IMR-90 (cell line): ENCODE measurements at regions of chr16 and their contacts with region 1.

Region 1: DNA sequence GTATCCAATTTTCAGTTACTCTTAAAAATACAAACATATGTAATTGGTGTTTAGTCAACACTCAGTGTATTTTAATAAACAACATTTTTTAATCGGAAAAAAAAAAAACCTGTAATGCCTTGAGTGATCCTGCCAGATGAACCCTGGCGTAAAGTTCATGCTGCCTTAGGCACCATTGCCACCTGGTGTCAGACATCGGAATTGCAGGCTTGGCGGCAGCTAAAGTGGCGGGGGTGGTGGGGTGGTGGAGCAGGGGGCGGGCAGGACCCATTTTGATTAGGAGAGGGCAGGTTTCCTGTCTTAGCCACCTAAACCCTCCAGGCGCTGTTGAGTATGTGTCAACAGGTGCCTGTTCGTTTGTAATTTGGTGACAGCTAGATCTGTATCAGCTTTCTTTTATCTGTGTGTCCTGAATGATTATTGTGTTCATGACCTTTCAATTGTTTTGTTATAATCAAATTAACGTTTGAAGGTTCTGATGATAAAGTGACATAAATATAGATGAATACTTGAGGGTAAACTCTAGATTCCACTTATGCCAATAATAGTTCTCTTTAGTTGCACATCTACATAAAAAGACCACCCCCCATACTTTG is 588.7 kb downstream of the CDH13 start:
- DNase-seq: peak; percentile 44
- ATAC-seq: peak; percentile 79
- H3K4me3 ChIP-seq: no peak overlapping the region
- H3K27ac ChIP-seq: no peak overlapping the region
- H3K4me1 ChIP-seq: no peaks in the 10 kb centered on the region
- H3K27me3 ChIP-seq: no peaks in the 10 kb centered on the region
- CTCF ChIP-seq: peak; percentile 80
- POLR2A ChIP-seq: no peak
- RAD21 ChIP-seq: peak; percentile 90

Region 2: DNA sequence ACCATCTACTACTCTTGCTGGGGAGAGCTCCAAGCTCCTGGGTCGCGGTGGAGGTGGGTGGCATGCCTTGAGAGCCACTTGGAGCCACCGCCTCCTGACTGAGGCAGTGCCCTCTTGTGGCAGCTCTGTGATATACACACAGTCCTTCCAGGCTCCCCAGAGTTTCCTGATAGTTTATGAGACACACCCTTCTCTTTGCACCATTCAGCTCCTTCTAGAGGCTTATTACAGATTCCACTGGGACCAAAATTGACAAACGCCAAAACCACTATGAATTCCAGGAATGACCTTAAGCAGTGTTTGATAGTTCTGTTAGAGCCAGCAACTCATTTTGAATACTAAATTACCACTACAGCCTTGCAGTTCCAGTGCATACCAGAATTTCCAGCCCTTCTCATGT is 758.8 kb before region 1 on chr16:
- CTCF ChIA-PET with region 1: no interaction called
- POLR2A ChIA-PET with region 1: no interaction called
- dilution Hi-C with region 1: no loop called
- in situ Hi-C with region 1: no loop called
- intact Hi-C with region 1: loop called (anchors 1 kb)
- DNase-seq: peak; percentile 36
- ATAC-seq: peak; percentile 93
- H3K4me3 ChIP-seq: no peak overlapping the region
- H3K27ac ChIP-seq: no peak overlapping the region
- H3K4me1 ChIP-seq: no peaks in the 10 kb centered on the region
- H3K27me3 ChIP-seq: peaks cover 1% of the 10 kb centered on the region
- CTCF ChIP-seq: peak; percentile 61
- POLR2A ChIP-seq: no peak
- RAD21 ChIP-seq: peak; percentile 40; the same call in 1 of the 2 replicates

Region 3: DNA sequence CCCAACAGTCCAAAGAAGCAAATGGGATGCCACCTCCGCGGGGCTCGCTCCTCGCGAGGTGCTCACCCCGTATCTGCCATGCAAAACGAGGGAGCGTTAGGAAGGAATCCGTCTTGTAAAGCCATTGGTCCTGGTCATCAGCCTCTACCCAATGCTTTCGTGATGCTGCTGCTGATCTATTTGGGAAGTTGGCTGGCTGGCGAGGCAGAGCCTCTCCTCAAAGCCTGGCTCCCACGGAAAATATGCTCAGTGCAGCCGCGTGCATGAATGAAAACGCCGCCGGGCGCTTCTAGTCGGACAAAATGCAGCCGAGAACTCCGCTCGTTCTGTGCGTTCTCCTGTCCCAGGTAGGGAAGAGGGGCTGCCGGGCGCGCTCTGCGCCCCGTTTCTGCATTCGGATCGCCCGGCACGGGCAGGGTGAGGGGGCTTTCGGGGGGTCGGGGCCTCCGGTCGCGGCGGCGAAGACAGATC is 588.7 kb before region 1 on chr16 and contains the start of gene CDH13:
- CTCF ChIA-PET with region 1: no interaction called
- POLR2A ChIA-PET with region 1: no interaction called
- dilution Hi-C with region 1: no loop called
- in situ Hi-C with region 1: loop called (anchors 10 kb)
- intact Hi-C with region 1: loop called (anchors 1 kb)
- DNase-seq: peak; percentile 77
- ATAC-seq: peak; percentile 40
- H3K4me3 ChIP-seq: peak within 1 kb of the TSS; percentile 60
- H3K27ac ChIP-seq: peak within 1 kb of the TSS; percentile 46
- H3K4me1 ChIP-seq: peaks cover 18% of the 10 kb centered on the region
- H3K27me3 ChIP-seq: peaks cover 21% of the 10 kb centered on the region
- CTCF ChIP-seq: no peak
- POLR2A ChIP-seq: peak; percentile 66; the same call in 1 of the 2 replicates
- RAD21 ChIP-seq: no peak
- total RNA-seq, gene CDH13: 45.8 and 74.7 TPM in 2 replicates

Region 4: GRCh38 chr16:82748026-82748425 is 467.5 kb before region 1 on chr16:
- CTCF ChIA-PET with region 1: no interaction called
- POLR2A ChIA-PET with region 1: no interaction called
- dilution Hi-C with region 1: no loop called
- in situ Hi-C with region 1: no loop called
- intact Hi-C with region 1: loop called (anchors 5 kb)
- DNase-seq: peak; percentile 66
- ATAC-seq: peak; percentile 57; the same call in 1 of the 2 replicates
- H3K4me3 ChIP-seq: no peak overlapping the region
- H3K27ac ChIP-seq: no peak overlapping the region
- H3K4me1 ChIP-seq: no peaks in the 10 kb centered on the region
- H3K27me3 ChIP-seq: no peaks in the 10 kb centered on the region
- CTCF ChIP-seq: peak; percentile 42
- POLR2A ChIP-seq: no peak
- RAD21 ChIP-seq: peak; percentile 43

Region 5: DNA sequence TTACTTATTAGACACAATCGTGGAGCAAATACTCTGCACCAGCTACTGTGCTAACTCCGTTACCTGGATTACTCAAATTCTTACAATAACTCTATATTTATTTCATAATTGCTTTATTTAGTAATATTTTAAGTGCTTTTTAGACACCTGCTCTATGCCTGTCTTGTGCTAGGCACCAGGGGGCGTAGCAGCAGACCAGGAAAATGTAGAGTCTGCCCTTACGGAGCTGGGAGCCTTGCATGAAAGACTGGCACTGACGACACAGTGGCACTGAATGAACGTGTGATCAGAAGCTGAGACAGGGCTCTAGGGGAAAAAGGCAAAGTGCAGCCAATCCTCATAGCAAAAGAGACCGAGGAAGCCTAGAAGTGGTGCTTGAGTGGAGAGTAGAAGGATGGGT is 102.2 kb before region 1 on chr16:
- CTCF ChIA-PET with region 1: interaction called, 4 read pairs
- POLR2A ChIA-PET with region 1: no interaction called
- dilution Hi-C with region 1: no loop called
- in situ Hi-C with region 1: no loop called
- intact Hi-C with region 1: loop called (anchors 2 kb)
- DNase-seq: peak; percentile 31
- ATAC-seq: peak; percentile 74
- H3K4me3 ChIP-seq: no peak overlapping the region
- H3K27ac ChIP-seq: no peak overlapping the region
- H3K4me1 ChIP-seq: peaks cover 4% of the 10 kb centered on the region
- H3K27me3 ChIP-seq: no peaks in the 10 kb centered on the region
- CTCF ChIP-seq: peak; percentile 53
- POLR2A ChIP-seq: no peak
- RAD21 ChIP-seq: peak; percentile 47

Region 6: DNA sequence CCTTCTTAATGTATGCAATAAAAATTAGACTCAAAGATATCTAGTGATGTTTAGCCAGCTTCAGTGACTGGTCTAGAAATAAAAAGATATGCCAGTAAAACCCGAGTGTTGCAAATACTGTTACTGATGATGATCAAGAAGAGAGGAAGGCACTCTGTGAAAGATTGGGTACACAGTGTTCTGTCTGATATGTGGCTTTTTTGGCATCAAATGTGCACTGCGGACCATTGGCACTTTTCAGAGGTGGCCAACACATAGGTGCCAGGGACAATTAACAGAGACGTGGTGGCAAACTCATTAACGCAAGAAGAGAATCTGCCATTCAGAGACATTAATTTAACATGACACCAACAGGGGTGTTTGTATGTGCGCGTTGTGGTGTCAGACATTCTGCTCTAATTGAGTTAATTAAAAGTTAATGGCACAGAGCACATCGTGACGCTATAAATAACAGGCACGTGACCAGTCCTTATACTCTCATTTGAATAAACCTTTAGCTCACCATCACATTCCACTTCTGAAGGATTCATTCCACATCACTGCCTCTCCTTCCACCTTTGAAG is 42.9 kb after region 1 on chr16:
- CTCF ChIA-PET with region 1: no interaction called
- POLR2A ChIA-PET with region 1: no interaction called
- dilution Hi-C with region 1: no loop called
- in situ Hi-C with region 1: no loop called
- intact Hi-C with region 1: no loop called
- DNase-seq: no peak
- ATAC-seq: no peak
- H3K4me3 ChIP-seq: no peak overlapping the region
- H3K27ac ChIP-seq: no peak overlapping the region
- H3K4me1 ChIP-seq: no peaks in the 10 kb centered on the region
- H3K27me3 ChIP-seq: no peaks in the 10 kb centered on the region
- CTCF ChIP-seq: no peak
- POLR2A ChIP-seq: no peak
- RAD21 ChIP-seq: no peak

Region 7: DNA sequence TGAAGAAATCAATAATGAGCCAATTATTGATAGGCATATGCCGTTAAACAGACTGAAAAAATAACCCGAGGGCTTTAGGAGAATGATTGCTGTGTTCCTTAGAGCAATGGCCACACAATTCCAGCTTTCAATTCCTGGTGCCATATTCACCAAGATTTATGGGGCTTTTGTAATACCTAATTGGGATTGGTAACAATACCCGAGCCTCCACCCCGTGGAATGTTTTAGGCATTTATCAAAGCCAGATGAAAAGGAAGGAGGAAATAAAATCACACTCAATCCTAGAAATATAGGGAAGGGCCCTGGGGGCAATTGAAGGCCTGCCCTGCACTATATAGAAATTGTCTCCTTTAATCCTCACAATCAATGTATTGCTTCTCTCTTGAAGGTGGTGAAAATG is 641.3 kb after region 1 on chr16:
- CTCF ChIA-PET with region 1: no interaction called
- POLR2A ChIA-PET with region 1: no interaction called
- dilution Hi-C with region 1: no loop called
- in situ Hi-C with region 1: no loop called
- intact Hi-C with region 1: no loop called
- DNase-seq: no peak
- ATAC-seq: no peak
- H3K4me3 ChIP-seq: no peak overlapping the region
- H3K27ac ChIP-seq: no peak overlapping the region
- H3K4me1 ChIP-seq: no peaks in the 10 kb centered on the region
- H3K27me3 ChIP-seq: peaks cover 25% of the 10 kb centered on the region
- CTCF ChIP-seq: no peak
- POLR2A ChIP-seq: no peak
- RAD21 ChIP-seq: no peak